PC-3 (cell line): ENCODE measurements at regions of chr7 and their contacts with region 1.

Region 1: GRCh38 chr7:103821092-103821491 is 168.4 kb downstream of the RELN start:
- DNase-seq: no peak
- ATAC-seq: no peak
- H3K4me3 ChIP-seq: no peak overlapping the region
- H3K27ac ChIP-seq: no peak overlapping the region
- H3K4me1 ChIP-seq: no peaks in the 10 kb centered on the region
- H3K27me3 ChIP-seq: no peaks in the 10 kb centered on the region
- CTCF ChIP-seq: no peak

Region 2: DNA sequence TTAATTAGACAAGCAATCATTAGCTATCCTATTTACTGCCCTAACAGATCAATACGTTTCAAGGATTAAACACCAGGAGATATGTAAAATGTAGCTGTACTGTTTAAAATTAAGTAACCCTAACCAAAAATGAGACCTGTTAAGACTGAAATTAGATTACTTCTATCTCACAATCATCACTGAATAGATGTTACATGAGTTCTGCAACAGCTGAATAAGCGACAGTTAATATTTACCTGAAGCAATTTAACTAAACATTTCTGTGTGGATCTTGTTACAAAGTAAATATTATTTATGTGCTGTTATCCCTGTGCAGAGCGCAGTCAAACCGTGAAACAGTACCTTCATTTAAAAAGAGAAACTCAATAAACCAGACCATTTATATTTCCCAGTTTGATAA is 45.8 kb after region 1 on chr7:
- CTCF ChIA-PET with region 1: no interaction called
- POLR2A ChIA-PET with region 1: no interaction called
- intact Hi-C with region 1: loop called (anchors 1 kb)
- DNase-seq: peak; percentile 7
- ATAC-seq: peak; percentile 81
- H3K4me3 ChIP-seq: no peak overlapping the region
- H3K27ac ChIP-seq: no peak overlapping the region
- H3K4me1 ChIP-seq: no peaks in the 10 kb centered on the region
- H3K27me3 ChIP-seq: peaks cover 22% of the 10 kb centered on the region; the same call in 1 of the 2 replicates
- CTCF ChIP-seq: no peak

Region 3: DNA sequence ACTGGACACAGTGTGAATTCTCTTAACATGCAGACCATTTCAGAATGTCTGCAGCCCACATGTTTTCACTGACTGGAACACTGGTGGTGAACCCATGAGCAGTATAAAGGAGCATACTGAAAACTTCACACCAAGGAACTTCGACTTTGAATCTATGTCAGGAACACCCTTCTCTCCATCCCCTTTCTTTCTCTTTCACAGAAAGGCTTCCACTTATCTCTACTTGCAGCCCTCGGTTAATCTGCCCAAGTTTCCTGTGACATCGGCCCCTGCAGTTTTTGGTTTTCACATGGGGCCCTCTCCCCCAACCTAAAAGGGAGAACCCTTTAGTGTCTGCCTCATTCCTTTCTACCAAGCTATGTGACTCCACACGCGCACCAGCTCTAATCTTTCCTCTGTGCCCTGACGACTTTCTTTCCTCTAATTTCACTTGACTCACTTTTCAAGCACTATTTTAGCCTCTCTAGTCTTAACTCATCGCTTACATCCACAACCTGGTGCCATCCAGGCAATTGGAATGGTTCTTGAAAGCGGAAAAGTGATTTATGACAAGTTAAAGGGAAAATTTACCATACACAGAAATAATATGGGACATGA is 98.3 kb after region 1 on chr7:
- CTCF ChIA-PET with region 1: no interaction called
- POLR2A ChIA-PET with region 1: no interaction called
- intact Hi-C with region 1: no loop called
- DNase-seq: no peak
- ATAC-seq: no peak
- H3K4me3 ChIP-seq: no peak overlapping the region
- H3K27ac ChIP-seq: no peak overlapping the region
- H3K4me1 ChIP-seq: no peaks in the 10 kb centered on the region
- H3K27me3 ChIP-seq: peaks cover 5% of the 10 kb centered on the region
- CTCF ChIP-seq: no peak